ENCODE measurements at regions of chr12 and their contacts with region 1.

Region 1: DNA sequence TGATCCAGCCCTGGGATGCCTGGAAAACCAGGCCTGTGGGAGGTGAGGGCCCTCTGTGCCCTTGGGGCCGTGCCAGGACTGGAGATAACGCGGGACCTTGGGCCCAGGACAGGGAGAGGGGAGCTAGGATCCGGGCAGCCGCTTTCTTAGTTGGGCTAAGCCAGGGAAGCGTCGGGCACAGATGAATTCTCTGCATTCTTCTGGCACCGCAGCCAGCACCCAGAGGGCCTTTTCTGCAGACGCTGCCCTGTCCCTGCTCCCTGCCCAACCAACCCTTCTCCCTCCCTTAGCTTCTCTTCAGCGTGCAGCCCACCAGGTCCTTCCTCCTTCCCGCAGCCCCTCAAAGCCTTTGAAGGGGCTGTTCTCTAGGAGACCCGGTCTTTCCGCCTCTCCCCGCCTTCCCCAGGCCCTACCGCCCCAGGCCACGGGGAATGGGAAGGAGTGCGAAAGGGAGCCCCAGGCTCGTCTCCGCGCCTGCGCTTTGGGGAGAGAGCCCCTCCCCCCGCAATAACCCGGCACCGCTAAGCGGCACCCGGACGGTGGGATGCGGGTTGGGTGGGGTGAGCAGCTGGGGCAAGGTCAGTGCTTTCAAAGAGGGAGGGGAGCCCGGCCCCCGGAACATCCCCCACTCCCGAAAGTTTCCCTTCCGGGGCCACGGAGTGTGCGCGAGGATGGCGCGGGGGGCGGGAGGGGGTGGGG is 663 bp downstream of the NCKAP5L start:
- DNase-seq: peak; percentile 85
- ATAC-seq: peak; percentile 56

Region 2: GRCh38 chr12:49809906-49810389 is 17.6 kb before region 1 on chr12:
- intact Hi-C with region 1: loop called (anchors 2 kb)
- DNase-seq: no peak
- ATAC-seq: peak; percentile 60

Measured in Right ventricle myocardium inferior (tissue), 1 donor.